ENCODE measurements at regions of chrX and their contacts with region 1.

Region 1: GRCh38 chrX:134908356-134908755 is 82.4 kb upstream of the SMIM10 start:
- DNase-seq: peak; percentile 37
- ATAC-seq: peak; percentile 57
- H3K4me3 ChIP-seq: no peak overlapping the region
- H3K27ac ChIP-seq: no peak overlapping the region
- H3K4me1 ChIP-seq: no peaks in the 10 kb centered on the region
- H3K27me3 ChIP-seq: no peaks in the 10 kb centered on the region
- CTCF ChIP-seq: peak; percentile 57

Region 2: DNA sequence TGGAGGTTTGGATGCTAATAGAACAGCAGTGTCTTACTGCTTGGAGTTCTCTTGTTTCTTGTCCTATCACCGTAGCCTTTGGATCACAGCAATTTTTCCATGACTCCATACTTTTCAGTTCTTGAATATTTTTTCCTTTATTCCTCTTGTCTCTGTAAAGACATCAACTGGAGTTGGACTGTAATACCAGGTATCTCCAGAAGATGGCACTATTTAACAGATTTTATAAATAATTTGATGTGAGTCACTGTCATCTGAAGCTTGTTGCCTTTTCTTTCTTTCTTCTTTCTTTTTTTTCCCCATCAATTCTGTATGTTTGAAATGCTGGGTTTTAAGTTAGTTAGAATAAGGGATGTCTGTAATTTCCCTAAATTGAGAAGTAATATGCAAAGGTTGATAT is 424.3 kb before region 1 on chrX:
- CTCF ChIA-PET with region 1: no interaction called
- POLR2A ChIA-PET with region 1: no interaction called
- intact Hi-C with region 1: loop called (anchors 10 kb)
- DNase-seq: peak; percentile 81
- ATAC-seq: no peak
- H3K4me3 ChIP-seq: no peak overlapping the region
- H3K27ac ChIP-seq: no peak overlapping the region
- H3K4me1 ChIP-seq: no peaks in the 10 kb centered on the region
- H3K27me3 ChIP-seq: no peaks in the 10 kb centered on the region
- CTCF ChIP-seq: peak; percentile 77

Region 3: GRCh38 chrX:134868771-134869495 is 39.4 kb before region 1 on chrX:
- CTCF ChIA-PET with region 1: no interaction called
- POLR2A ChIA-PET with region 1: no interaction called
- intact Hi-C with region 1: no loop called
- DNase-seq: peak; percentile 84
- ATAC-seq: peak; percentile 95
- H3K4me3 ChIP-seq: no peak overlapping the region
- H3K27ac ChIP-seq: peak overlapping the region; percentile 95
- H3K4me1 ChIP-seq: peaks cover 14% of the 10 kb centered on the region
- H3K27me3 ChIP-seq: no peaks in the 10 kb centered on the region
- CTCF ChIP-seq: no peak

Measured in PC-3 (cell line).